ENCODE measurements at regions of chr17 and their contacts with region 1.

Region 1: DNA sequence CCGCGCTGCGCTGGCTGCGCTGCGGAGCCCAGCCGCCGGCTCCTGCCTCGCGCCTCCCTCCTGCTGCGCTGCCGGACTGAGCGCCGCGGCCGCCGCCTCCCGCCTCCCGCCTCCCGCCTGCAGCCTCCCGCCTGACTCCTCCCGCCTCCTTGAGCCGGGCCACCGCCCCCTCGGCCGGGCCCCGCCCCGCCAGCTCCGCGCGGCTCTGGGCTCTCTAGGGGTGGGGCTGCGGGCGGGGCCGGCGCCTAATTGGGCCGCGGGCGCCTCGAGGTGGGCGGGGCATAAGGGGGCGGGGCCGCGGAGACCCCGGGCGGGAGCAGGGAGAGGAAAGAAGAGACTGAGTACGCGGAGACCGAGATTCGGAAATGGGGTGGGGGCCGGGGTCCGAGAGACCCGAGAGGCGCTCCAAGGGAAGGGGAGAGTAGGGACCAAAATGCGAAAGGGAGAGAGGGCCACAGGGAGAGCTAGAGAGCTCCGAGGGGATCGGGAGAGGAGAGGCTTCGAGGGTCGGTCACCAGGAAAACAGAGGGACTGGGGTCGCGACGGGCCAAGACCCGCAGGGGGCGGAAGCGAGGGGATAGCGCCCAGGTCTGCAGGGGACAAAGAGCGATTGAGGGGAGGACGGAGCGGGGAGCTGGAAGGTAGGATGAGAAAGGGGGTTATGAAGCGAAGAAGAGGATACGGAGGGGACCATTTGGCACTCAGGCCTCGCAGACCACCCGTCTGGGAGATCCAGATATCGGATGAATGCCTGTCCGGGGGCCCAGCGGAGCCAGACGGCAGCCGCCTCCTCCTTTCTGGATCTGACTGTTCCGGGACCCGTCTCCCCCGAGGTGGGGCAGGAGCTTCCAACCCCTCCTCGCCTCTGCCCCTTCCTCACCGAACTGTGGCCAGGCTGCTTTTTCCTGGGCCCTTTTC is at the start of gene C1QL1:
- DNase-seq: peak; percentile 86
- H3K4me3 Mint-ChIP-seq: peak within 1 kb of the TSS; percentile 59
- H3K27ac Mint-ChIP-seq: no peak within 1 kb of the TSS
- H3K4me1 Mint-ChIP-seq: peaks cover 44% of the 10 kb centered on the region
- H3K27me3 Mint-ChIP-seq: peaks cover 51% of the 10 kb centered on the region
- total RNA-seq, gene C1QL1: 0.36 to 0.40 TPM

Region 2: GRCh38 chr17:44899069-44899782 is 69.3 kb before region 1 on chr17 and contains the start of gene EFTUD2:
- CTCF ChIA-PET with region 1: no interaction called
- intact Hi-C with region 1: loop called (anchors 1 kb)
- DNase-seq: peak; percentile 94
- H3K4me3 Mint-ChIP-seq: peak within 1 kb of the TSS; percentile 90
- H3K27ac Mint-ChIP-seq: peak within 1 kb of the TSS; percentile 97
- H3K4me1 Mint-ChIP-seq: peaks cover 25% of the 10 kb centered on the region
- H3K27me3 Mint-ChIP-seq: peaks cover 2% of the 10 kb centered on the region
- total RNA-seq, gene EFTUD2: 170 to 176 TPM

Region 3: GRCh38 chr17:44947461-44948314 is 20.8 kb before region 1 on chr17 and contains the start of gene KIF18B:
- CTCF ChIA-PET with region 1: interaction called, 4 read pairs
- intact Hi-C with region 1: loop called (anchors 1 kb)
- DNase-seq: peak; percentile 97
- H3K4me3 Mint-ChIP-seq: peak within 1 kb of the TSS; percentile 84
- H3K27ac Mint-ChIP-seq: peak within 1 kb of the TSS; percentile 74
- H3K4me1 Mint-ChIP-seq: peaks cover 7% of the 10 kb centered on the region
- H3K27me3 Mint-ChIP-seq: peaks cover 5% of the 10 kb centered on the region
- total RNA-seq, gene KIF18B: 54.9 to 55.4 TPM

Region 4: DNA sequence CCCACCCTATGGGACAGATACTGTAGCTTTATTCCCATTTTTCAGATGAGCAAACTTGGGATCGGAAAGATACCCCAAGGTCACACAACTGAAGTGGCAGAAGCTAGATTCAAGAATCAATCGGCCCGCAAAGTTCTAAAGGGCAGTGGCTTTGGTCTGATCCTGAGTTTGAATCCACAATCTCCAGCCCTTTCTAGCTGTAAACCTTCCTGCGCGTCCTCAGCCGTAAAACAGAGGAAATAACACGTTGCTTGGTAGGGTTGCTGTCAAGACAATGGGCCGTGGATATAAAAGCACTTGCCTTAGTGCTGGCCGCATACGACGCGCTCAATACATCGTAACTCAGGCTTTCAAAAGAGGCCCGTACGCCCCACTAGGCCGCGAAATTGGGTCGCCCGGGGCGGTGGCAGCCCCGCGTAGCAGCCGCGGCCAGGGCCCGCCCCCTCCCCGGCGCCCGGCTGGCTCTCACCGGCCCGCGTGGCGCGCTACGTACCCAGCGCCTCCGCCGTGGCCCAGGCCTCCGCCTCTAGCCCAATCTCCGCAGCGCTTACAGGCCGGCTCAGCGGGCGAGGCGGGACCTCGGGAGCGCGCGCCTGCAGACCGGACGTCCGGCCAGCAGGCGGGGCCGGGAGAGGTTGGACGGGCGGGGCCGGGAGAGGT is 82.7 kb after region 1 on chr17 and contains the start of gene DCAKD:
- CTCF ChIA-PET with region 1: interaction called, 3 read pairs
- intact Hi-C with region 1: loop called (anchors 2 kb)
- DNase-seq: peak; percentile 93
- H3K4me3 Mint-ChIP-seq: peak within 1 kb of the TSS; percentile 82
- H3K27ac Mint-ChIP-seq: peak within 1 kb of the TSS; percentile 93
- H3K4me1 Mint-ChIP-seq: peaks cover 41% of the 10 kb centered on the region
- H3K27me3 Mint-ChIP-seq: no peaks in the 10 kb centered on the region
- total RNA-seq, gene DCAKD: 38.1 to 38.9 TPM

Region 5: GRCh38 chr17:45228763-45229539 is 260.5 kb after region 1 on chr17:
- CTCF ChIA-PET with region 1: no interaction called
- intact Hi-C with region 1: loop called (anchors 5 kb)
- DNase-seq: peak; percentile 96
- H3K4me3 Mint-ChIP-seq: peak overlapping the region; percentile 100
- H3K27ac Mint-ChIP-seq: peak overlapping the region; percentile 100
- H3K4me1 Mint-ChIP-seq: peaks cover 82% of the 10 kb centered on the region
- H3K27me3 Mint-ChIP-seq: no peaks in the 10 kb centered on the region

Region 6: GRCh38 chr17:46002311-46002972 is 1034.0 kb after region 1 on chr17:
- CTCF ChIA-PET with region 1: no interaction called
- intact Hi-C with region 1: no loop called
- DNase-seq: peak; percentile 82
- H3K4me3 Mint-ChIP-seq: no peak overlapping the region
- H3K27ac Mint-ChIP-seq: no peak overlapping the region
- H3K4me1 Mint-ChIP-seq: no peaks in the 10 kb centered on the region
- H3K27me3 Mint-ChIP-seq: no peaks in the 10 kb centered on the region